ENCODE measurements at regions of chr22 and their contacts with region 1.

Region 1: GRCh38 chr22:30763815-30764686 is 69.4 kb downstream of the OSBP2 start:
- DNase-seq: peak; percentile 76
- H3K4me3 Mint-ChIP-seq: no peak overlapping the region
- H3K27ac Mint-ChIP-seq: no peak overlapping the region
- H3K4me1 Mint-ChIP-seq: no peaks in the 10 kb centered on the region
- H3K27me3 Mint-ChIP-seq: no peaks in the 10 kb centered on the region

Region 2: DNA sequence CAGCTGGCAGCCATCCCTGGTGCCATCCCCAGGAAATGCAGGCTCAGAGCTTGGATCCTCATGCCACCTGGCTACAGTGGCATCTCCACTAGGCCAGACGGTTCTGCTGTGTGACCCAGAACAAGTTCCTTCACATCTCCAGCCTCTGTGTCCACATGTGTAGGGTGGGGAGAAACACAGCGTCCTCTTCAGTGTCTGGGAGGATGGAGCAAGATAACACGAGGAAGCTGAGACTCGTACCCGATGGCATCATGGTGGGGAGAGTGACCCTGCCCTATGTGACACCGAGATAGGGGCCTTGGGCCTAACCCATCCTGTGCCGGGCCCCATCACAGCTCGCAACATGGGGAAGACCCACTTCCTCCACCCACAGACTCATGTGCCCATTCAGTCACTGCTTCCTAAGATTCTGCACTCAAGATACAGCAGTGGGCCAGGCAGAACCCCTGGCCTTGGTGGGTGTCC is 126.0 kb after region 1 on chr22:
- CTCF ChIA-PET with region 1: no interaction called
- POLR2A ChIA-PET with region 1: interaction called, 12 read pairs
- DNase-seq: no peak
- H3K4me3 Mint-ChIP-seq: no peak overlapping the region
- H3K27ac Mint-ChIP-seq: no peak overlapping the region
- H3K4me1 Mint-ChIP-seq: peaks cover 21% of the 10 kb centered on the region
- H3K27me3 Mint-ChIP-seq: no peaks in the 10 kb centered on the region

Measured in activated CD4-positive, alpha-beta T cell treated with anti-CD3 and anti-CD28 coated beads, Interleukin-2, amount 10 ng/mL, durations not matched to agents 7 days and 5 days (primary cell).